Body of pancreas (tissue), 4 donors: ENCODE measurements at regions of chr22 and their contacts with region 1.

Region 1: DNA sequence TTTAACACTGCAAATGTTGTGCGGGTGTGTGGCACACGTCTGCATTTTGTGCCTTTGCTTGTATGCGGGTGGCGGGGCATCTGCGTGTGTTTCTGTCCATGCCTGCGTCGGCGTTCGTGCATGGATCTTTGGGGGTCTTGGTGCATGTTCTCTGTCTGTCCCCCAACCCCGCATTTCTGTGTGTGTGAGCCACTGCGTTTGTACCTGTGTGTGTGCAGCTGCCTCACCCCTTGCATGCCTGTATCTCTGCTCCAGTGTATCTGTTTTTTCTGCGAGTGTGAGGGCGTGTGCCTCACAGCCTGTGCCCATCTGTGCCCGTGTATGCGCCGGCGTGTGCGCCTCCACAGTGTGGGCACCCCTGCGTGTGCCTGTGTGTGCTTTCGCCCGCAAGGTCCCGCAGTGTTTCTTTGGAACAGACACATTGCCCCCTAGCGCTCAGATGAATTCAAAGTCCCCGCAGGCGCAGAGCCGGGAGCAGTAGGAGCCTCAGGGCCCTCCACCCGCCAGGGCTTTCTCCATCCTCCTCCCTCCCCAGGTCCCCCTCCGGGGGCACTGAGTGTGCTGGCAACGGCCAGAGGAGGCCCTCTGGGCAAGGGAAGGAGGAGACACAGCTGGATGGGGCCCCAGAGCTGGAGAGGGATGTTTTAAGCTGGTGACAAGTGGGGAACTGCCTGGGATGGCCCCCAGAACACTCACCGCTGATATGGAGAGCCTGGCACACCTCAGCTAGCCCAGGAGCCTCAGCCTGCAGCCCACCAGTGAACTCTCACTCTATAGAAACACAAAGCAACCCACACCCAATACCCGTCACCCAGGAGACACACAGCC is 3.1 kb upstream of the MN1 start:
- DNase-seq: peak; percentile 72 to 77 (median 75)
- ATAC-seq: peak; percentile 62
- H3K4me3 ChIP-seq: no peak overlapping the region
- H3K27ac ChIP-seq: no peak overlapping the region
- H3K4me1 ChIP-seq: peaks cover 32% of the 10 kb centered on the region
- H3K27me3 ChIP-seq: peaks cover 0 to 9% of the 10 kb centered on the region in 2 donors
- CTCF ChIP-seq: peak; percentile 50 to 71 (median 67)
- POLR2A ChIP-seq: no peak

Region 2: DNA sequence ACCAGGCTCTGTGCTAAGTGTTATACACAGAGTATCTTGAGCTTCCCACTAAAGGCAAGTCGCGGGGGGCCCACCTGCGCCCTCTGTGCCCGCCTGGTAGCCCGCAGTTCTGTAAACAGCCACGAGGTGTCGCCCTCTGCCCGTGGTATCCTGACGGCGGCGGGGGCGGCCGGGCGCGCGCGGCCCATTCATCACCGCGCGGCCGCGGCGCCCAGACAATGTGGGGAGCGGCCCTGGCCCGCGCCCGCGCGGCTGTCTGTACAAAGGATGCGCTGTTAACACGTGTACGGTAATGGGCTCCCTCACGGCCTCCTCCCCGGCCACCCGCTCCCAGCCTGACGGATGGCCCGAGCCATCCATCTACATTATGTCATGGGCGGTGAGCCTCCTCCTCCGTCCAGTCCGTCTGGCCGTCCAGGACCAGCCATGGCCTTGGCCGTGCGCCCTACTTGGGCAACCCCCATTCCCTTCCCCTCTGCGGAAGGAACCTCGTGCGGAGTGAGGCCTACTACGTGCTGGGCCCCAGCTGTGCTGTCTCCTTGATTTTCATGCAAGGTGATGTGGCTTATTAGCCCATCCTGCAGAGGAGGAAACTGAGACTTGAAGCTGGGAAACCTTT is 1047.9 kb before region 1 on chr22:
- intact Hi-C with region 1: loop called (anchors 10 kb)
- DNase-seq: peak; percentile 9 to 54 (median 50)
- ATAC-seq: peak; percentile 61
- H3K4me3 ChIP-seq: no peak overlapping the region
- H3K27ac ChIP-seq: no peak overlapping the region
- H3K4me1 ChIP-seq: no peaks in the 10 kb centered on the region
- H3K27me3 ChIP-seq: no peaks in the 10 kb centered on the region
- CTCF ChIP-seq: peak; percentile 56 to 83 (median 65)
- POLR2A ChIP-seq: no peak

Region 3: GRCh38 chr22:27405672-27406388 is 398.9 kb before region 1 on chr22:
- intact Hi-C with region 1: loop called (anchors 10 kb)
- DNase-seq: peak; percentile 73 to 82 (median 76)
- ATAC-seq: peak; percentile 89
- H3K4me3 ChIP-seq: no peak overlapping the region
- H3K27ac ChIP-seq: no peak overlapping the region
- H3K4me1 ChIP-seq: peaks cover 8% of the 10 kb centered on the region
- H3K27me3 ChIP-seq: no peaks in the 10 kb centered on the region
- CTCF ChIP-seq: peak; percentile 68 to 88 (median 78)
- POLR2A ChIP-seq: no peak

Region 4: GRCh38 chr22:27614006-27614649 is 190.6 kb before region 1 on chr22:
- intact Hi-C with region 1: no loop called
- DNase-seq: no peak
- ATAC-seq: no peak
- H3K4me3 ChIP-seq: no peak overlapping the region
- H3K27ac ChIP-seq: no peak overlapping the region
- H3K4me1 ChIP-seq: peaks cover 14% of the 10 kb centered on the region
- H3K27me3 ChIP-seq: peaks cover 0 to 7% of the 10 kb centered on the region in 2 donors
- CTCF ChIP-seq: no peak
- POLR2A ChIP-seq: no peak

Region 5: DNA sequence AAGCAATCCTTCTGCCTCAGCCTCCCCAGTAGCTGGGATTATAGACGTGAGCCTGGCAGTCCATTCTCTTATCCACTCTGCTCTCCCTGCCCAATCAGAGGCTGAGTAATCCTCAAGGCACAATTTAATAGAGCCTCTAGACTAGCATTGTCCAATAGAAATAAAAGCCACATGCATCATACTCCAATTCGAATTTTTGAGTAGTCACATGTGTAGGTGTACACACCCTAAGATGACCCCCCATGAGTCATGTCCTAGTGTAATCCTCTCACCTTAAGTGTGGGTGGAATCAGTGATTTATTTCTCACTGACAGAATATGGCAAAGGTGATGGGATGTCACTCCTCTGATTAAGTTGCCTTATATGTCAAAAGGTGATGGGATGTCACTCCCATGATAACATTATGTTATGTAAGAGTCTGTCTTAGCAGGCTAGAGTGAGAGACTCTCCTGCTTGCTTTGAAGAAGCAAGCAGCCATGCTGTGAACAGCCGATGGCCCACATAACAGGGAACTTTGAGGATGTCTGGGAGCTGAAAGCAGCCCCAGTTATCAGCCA is 64.4 kb before region 1 on chr22:
- intact Hi-C with region 1: no loop called
- DNase-seq: no peak
- ATAC-seq: no peak
- H3K4me3 ChIP-seq: no peak overlapping the region
- H3K27ac ChIP-seq: no peak overlapping the region
- H3K4me1 ChIP-seq: no peaks in the 10 kb centered on the region
- H3K27me3 ChIP-seq: no peaks in the 10 kb centered on the region
- CTCF ChIP-seq: no peak
- POLR2A ChIP-seq: no peak